Right lobe of liver (tissue), 6 donors: ENCODE measurements at regions of chr22 and their contacts with region 1.

Region 1: GRCh38 chr22:46576556-46577367 is 39.3 kb upstream of the CELSR1 start:
- DNase-seq: peak; percentile 64 to 69 (median 66)
- ATAC-seq: peak; percentile 13 to 44 (median 41)
- H3K4me3 ChIP-seq: peak overlapping the region; percentile 51 to 66 (median 62)
- H3K27ac ChIP-seq: peak overlapping the region in 2 of 3 donors; percentile 53 to 70
- H3K4me1 ChIP-seq: peaks cover 0 to 61% (median 26%) of the 10 kb centered on the region in 4 donors
- H3K27me3 ChIP-seq: no peaks in the 10 kb centered on the region
- CTCF ChIP-seq: no peak
- POLR2A ChIP-seq: no peak

Region 2: GRCh38 chr22:46462726-46463371 is 113.9 kb before region 1 on chr22:
- intact Hi-C with region 1: no loop called
- DNase-seq: no peak
- ATAC-seq: no peak
- H3K4me3 ChIP-seq: no peak overlapping the region
- H3K27ac ChIP-seq: no peak overlapping the region
- H3K4me1 ChIP-seq: no peaks in the 10 kb centered on the region
- H3K27me3 ChIP-seq: no peaks in the 10 kb centered on the region
- CTCF ChIP-seq: no peak
- POLR2A ChIP-seq: no peak

Region 3: DNA sequence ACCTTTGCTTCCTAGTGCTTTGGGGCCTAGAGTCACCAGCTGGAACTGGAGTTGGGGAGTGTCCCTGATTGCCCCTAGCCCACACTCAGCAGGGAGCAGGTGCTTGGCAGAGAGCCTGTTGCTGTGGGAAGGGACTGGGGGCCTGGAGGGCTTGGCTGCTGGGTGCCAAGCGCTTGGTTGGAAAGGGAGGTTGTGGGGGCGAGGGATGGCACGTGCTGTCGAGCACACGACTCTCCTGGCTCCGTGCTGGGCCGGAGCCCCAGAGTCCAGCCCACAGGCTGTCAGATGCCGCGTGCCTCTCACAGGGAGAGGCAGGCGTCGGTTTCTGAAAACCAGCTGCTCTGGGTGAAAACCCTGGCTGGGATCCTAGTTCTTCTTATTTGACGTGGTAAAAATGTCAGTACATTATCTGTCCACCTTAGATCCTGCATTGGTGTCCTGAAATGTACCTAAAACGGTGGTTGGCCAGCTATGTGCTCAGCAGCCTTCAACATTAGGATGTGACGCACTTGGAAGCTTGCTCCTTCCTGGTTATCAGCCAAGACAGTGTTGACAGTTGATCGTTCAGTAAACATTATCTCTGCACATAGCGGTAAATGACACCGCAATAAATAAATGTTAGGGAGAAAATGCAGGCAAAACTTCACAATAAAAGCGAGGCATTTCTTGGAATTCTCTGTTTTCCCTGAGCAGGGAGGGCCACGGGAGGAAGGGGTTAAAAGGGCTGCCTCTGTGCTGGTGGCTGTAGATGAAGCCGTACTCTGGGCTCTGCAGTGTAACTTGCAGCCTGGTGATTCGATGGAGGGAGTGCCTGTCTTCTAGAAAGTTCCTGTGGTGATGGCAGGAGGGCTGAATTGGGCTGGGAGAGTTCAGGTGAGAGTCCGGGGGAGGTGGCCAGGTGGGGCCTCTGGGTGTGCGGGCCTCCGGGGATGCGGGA is 72.6 kb after region 1 on chr22:
- intact Hi-C with region 1: loop called in 1 of 2 experiments (anchors 10 kb)
- DNase-seq: peak in 2 of 3 donors; percentile 74 to 85
- ATAC-seq: peak; percentile 54 to 70 (median 62)
- H3K4me3 ChIP-seq: peak overlapping the region in 2 of 3 donors; percentile 1 to 12
- H3K27ac ChIP-seq: peak overlapping the region; percentile 77 to 90 (median 78)
- H3K4me1 ChIP-seq: peaks cover 0 to 63% (median 27%) of the 10 kb centered on the region in 4 donors
- H3K27me3 ChIP-seq: no peaks in the 10 kb centered on the region
- CTCF ChIP-seq: no peak
- POLR2A ChIP-seq: peak; percentile 42

Region 4: GRCh38 chr22:46681010-46681409 is 104.2 kb after region 1 on chr22:
- intact Hi-C with region 1: no loop called
- DNase-seq: no peak
- ATAC-seq: peak; percentile 7 to 47 (median 35)
- H3K4me3 ChIP-seq: no peak overlapping the region
- H3K27ac ChIP-seq: no peak overlapping the region
- H3K4me1 ChIP-seq: peaks cover 0 to 8% (median 2%) of the 10 kb centered on the region in 4 donors
- H3K27me3 ChIP-seq: no peaks in the 10 kb centered on the region
- CTCF ChIP-seq: peak; percentile 20 to 49 (median 30)
- POLR2A ChIP-seq: no peak